Panc1 (cell line): ENCODE measurements at regions of chr9 and their contacts with region 1.

Region 1: GRCh38 chr9:123816817-123817472 is 113.0 kb downstream of the DENND1A start:
- DNase-seq: no peak
- ATAC-seq: no peak
- H3K4me3 ChIP-seq: no peak overlapping the region
- H3K27ac ChIP-seq: no peak overlapping the region
- H3K4me1 ChIP-seq: no peaks in the 10 kb centered on the region; the same call in 1 of the 2 replicates
- H3K27me3 ChIP-seq: no peaks in the 10 kb centered on the region
- CTCF ChIP-seq: no peak

Region 2: DNA sequence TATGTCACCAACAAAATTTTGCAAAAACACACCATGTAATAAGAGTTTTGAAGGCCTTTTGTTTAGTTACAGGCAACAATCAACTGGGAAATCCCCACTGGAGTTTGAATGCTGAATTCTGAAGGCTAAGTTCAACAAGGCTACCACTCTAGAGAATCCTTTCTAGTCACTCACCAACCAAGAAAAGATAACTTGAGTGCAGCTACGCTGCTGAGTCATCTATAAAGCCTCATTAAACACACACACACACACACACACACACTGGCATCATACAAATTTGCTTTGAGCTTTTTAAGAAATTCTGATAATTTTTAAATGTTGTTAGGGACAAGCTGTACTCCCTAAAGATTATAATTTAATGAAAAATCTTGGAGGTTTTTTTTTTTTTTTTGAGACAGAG is 106.6 kb before region 1 on chr9:
- CTCF ChIA-PET with region 1: no interaction called
- POLR2A ChIA-PET with region 1: no interaction called
- in situ Hi-C with region 1: no loop called
- intact Hi-C with region 1: no loop called
- DNase-seq: no peak
- ATAC-seq: no peak
- H3K4me3 ChIP-seq: no peak overlapping the region
- H3K27ac ChIP-seq: no peak overlapping the region
- H3K4me1 ChIP-seq: no peaks in the 10 kb centered on the region
- H3K27me3 ChIP-seq: no peaks in the 10 kb centered on the region
- CTCF ChIP-seq: no peak

Region 3: GRCh38 chr9:123843703-123844102 is 26.8 kb after region 1 on chr9:
- CTCF ChIA-PET with region 1: interaction called, 10 read pairs
- POLR2A ChIA-PET with region 1: no interaction called
- in situ Hi-C with region 1: no loop called
- intact Hi-C with region 1: no loop called
- DNase-seq: no peak
- ATAC-seq: no peak
- H3K4me3 ChIP-seq: no peak overlapping the region
- H3K27ac ChIP-seq: no peak overlapping the region
- H3K4me1 ChIP-seq: no peaks in the 10 kb centered on the region
- H3K27me3 ChIP-seq: no peaks in the 10 kb centered on the region
- CTCF ChIP-seq: no peak

Region 4: DNA sequence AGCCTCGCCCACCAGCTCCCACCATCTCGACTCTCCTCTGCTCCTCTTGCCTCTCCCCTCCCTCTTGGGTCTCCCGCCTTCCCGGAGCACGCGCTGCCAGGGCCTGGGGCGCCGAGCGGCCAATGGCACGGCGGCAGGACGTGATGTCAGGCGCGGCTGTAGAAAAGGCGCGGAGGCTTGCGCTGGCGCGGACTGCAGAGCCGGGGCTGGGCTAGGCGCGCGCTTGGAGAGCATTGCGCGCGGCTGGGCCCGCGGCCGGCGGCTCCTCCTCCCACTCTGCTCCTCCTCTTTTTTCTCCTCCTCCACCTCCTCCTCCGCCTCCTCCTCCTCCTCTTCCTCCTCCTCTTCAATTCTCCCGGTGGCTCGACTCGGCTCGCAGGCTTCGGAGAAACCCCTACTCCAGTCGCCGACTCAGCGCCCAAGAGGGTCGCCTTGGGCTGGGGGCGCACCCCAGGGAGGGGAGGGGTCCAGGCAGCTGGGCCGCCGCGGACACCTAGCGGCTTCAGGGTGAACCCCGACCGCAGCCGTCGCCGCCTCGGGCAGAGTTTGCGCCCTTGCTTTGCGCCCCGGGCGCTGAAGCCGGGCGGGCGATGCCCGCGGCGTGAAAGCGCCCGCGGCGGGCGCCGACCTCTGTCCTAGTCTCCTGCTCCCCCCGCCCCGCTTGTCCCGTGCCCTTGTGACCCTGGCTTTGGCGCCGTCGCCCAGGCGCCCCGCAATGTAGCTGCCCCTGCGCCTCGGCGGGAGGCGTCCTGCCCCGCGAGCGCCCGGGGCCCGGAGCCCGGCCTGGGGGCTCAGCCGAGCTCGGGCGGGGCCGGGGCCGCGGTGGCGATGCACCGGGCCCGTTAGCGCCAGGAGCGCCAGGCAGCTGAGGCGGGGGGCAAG is 194.7 kb after region 1 on chr9 and contains the start of gene LHX2:
- CTCF ChIA-PET with region 1: no interaction called
- POLR2A ChIA-PET with region 1: no interaction called
- in situ Hi-C with region 1: no loop called
- intact Hi-C with region 1: no loop called
- DNase-seq: no peak
- ATAC-seq: no peak
- H3K4me3 ChIP-seq: no peak within 1 kb of the TSS
- H3K27ac ChIP-seq: no peak within 1 kb of the TSS
- H3K4me1 ChIP-seq: no peaks in the 10 kb centered on the region
- H3K27me3 ChIP-seq: peaks cover 11% of the 10 kb centered on the region
- CTCF ChIP-seq: no peak
- total RNA-seq, gene LHX2: 0.36 TPM